ENCODE measurements at regions of chr10 and their contacts with region 1.

Region 1: DNA sequence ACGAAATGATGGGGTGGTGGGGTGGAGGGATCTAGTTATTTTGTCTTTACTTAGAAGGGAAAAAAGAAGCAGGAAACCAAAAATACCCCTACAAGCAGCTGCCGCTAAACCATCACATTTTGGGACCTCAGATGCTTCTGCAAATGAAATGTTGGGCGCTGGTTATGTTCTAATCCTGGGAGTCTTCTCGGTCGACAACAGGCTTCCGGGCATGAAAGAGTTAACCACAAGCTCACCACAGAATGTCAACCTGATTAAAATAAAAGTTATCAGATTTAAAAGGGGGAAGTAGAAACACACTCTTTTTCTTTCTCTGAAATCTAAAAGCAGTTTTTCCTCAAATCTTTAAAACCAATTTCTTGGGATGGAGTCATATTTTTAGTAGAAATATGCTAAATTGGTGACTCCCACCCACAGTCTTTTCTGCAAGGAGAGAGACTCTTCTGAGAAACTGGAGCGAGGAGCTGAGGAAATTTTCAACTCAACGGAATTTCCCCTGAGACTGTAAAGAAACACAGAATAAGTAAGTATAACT is 16.8 kb downstream of the IL2RA start:
- DNase-seq: no peak
- ATAC-seq: peak; percentile 51
- H3K4me3 ChIP-seq: peak overlapping the region; percentile 9; the same call in 1 of the 2 replicates
- H3K27ac ChIP-seq: no peak overlapping the region; the same call in 1 of the 2 replicates
- H3K4me1 ChIP-seq: peaks cover 44% of the 10 kb centered on the region
- H3K27me3 ChIP-seq: no peaks in the 10 kb centered on the region
- CTCF ChIP-seq: no peak
- EP300 ChIP-seq: no peak; a peak in 1 of 4 replicates
- POLR2A ChIP-seq: no peak
- RAD21 ChIP-seq: no peak

Region 2: DNA sequence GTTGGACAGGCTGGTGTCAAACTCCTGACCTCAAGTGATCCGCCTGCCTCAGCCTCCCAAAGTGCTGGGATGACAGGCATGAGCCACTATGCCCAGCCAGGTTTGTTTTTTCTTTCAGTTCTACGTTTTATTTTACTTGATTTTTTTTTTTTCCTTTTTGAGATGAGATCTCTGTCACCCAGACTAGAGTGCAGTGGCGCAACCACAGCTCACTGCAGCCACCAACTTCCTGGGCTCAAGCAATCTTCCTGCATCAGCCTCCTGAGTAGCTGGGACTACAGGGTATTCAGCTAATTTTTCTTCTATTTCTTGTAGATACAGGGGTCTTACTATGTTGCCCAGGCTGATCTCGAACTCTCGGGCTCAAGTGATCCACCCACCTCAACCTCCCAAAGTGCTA is 256.4 kb before region 1 on chr10:
- CTCF ChIA-PET with region 1: no interaction called
- POLR2A ChIA-PET with region 1: no interaction called
- RAD21 ChIA-PET with region 1: no interaction called
- SMC1A ChIA-PET with region 1: no interaction called
- in situ Hi-C with region 1: no loop called
- intact Hi-C with region 1: no loop called
- DNase-seq: no peak
- ATAC-seq: no peak
- H3K4me3 ChIP-seq: no peak overlapping the region
- H3K27ac ChIP-seq: no peak overlapping the region
- H3K4me1 ChIP-seq: no peaks in the 10 kb centered on the region
- H3K27me3 ChIP-seq: no peaks in the 10 kb centered on the region
- CTCF ChIP-seq: no peak
- EP300 ChIP-seq: no peak
- POLR2A ChIP-seq: no peak
- RAD21 ChIP-seq: no peak

Region 3: GRCh38 chr10:6033954-6034353 is 11.4 kb before region 1 on chr10:
- CTCF ChIA-PET with region 1: interaction called, 10 read pairs
- POLR2A ChIA-PET with region 1: no interaction called
- RAD21 ChIA-PET with region 1: interaction called, 8 read pairs
- SMC1A ChIA-PET with region 1: interaction called, 15 read pairs
- in situ Hi-C with region 1: no loop called
- intact Hi-C with region 1: no loop called
- DNase-seq: no peak
- ATAC-seq: no peak
- H3K4me3 ChIP-seq: no peak overlapping the region
- H3K27ac ChIP-seq: no peak overlapping the region
- H3K4me1 ChIP-seq: peaks cover 12% of the 10 kb centered on the region; the same call in 1 of the 2 replicates
- H3K27me3 ChIP-seq: no peaks in the 10 kb centered on the region
- CTCF ChIP-seq: no peak
- EP300 ChIP-seq: no peak
- POLR2A ChIP-seq: no peak
- RAD21 ChIP-seq: no peak

Region 4: GRCh38 chr10:6062101-6062771 is 16.9 kb after region 1 on chr10 and contains the start of gene IL2RA:
- CTCF ChIA-PET with region 1: interaction called, 12 read pairs
- POLR2A ChIA-PET with region 1: interaction called, 16 read pairs
- RAD21 ChIA-PET with region 1: interaction called, 5 read pairs
- SMC1A ChIA-PET with region 1: interaction called, 18 read pairs
- in situ Hi-C with region 1: no loop called
- intact Hi-C with region 1: no loop called
- DNase-seq: no peak
- ATAC-seq: peak; percentile 65
- H3K4me3 ChIP-seq: peak within 1 kb of the TSS; percentile 43; the same call in 1 of the 2 replicates
- H3K27ac ChIP-seq: peak within 1 kb of the TSS; percentile 14; the same call in 1 of the 2 replicates
- H3K4me1 ChIP-seq: peaks cover 28% of the 10 kb centered on the region
- H3K27me3 ChIP-seq: no peaks in the 10 kb centered on the region
- CTCF ChIP-seq: no peak
- EP300 ChIP-seq: no peak
- POLR2A ChIP-seq: no peak
- RAD21 ChIP-seq: no peak
- polyA plus RNA-seq, gene IL2RA: 3.3 to 5.1 TPM